ENCODE measurements at regions of chr4 and their contacts with region 1.

Region 1: DNA sequence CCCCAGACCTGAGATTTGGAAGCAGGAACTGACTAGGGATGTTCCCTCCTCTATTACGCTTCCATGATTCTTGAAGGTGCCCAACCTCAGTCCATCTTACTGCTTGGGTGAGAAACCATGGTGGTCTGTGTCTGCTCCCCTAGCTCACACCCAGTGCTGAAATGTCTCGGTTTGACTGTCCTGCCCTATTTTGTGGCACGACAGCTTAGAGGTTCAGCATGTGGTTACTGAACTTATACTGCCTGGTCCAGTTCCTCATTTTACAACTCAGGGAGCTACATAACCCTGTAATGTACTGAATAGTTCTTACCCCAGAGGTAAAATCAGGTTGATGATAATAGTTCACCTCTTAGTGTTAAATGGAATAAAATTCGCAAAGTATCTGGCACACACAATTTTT is 203.1 kb downstream of the RBM46 start:
- DNase-seq: no peak
- H3K4me3 ChIP-seq: no peak overlapping the region
- H3K27ac ChIP-seq: no peak overlapping the region
- H3K4me1 ChIP-seq: no peaks in the 10 kb centered on the region
- H3K27me3 ChIP-seq: no peaks in the 10 kb centered on the region
- CTCF ChIP-seq: no peak
- EP300 ChIP-seq: no peak
- POLR2A ChIP-seq: no peak
- RAD21 ChIP-seq: no peak

Region 2: GRCh38 chr4:155353923-155354540 is 369.9 kb after region 1 on chr4:
- CTCF ChIA-PET with region 1: interaction called, 17 read pairs
- POLR2A ChIA-PET with region 1: no interaction called
- DNase-seq: peak in 1 of 2 experiments; percentile 78
- H3K4me3 ChIP-seq: no peak overlapping the region
- H3K27ac ChIP-seq: no peak overlapping the region
- H3K4me1 ChIP-seq: no peaks in the 10 kb centered on the region
- H3K27me3 ChIP-seq: no peaks in the 10 kb centered on the region
- CTCF ChIP-seq: peak; percentile 74 to 78 (median 75)
- EP300 ChIP-seq: no peak
- POLR2A ChIP-seq: no peak
- RAD21 ChIP-seq: peak; percentile 88 to 89

Measured in H1 (cell line).